Psoas muscle (tissue), 8 donors: ENCODE measurements at regions of chr5 and their contacts with region 1.

Region 1: GRCh38 chr5:61162010-61162831 is at the start of gene SMIM15:
- DNase-seq: peak; percentile 90 to 94
- ATAC-seq: peak; percentile 96 to 99 (median 98)
- H3K4me3 ChIP-seq: peak within 1 kb of the TSS; percentile 82
- H3K27ac ChIP-seq: peak within 1 kb of the TSS; percentile 91
- H3K4me1 ChIP-seq: peaks cover 15% of the 10 kb centered on the region
- H3K27me3 ChIP-seq: no peaks in the 10 kb centered on the region
- CTCF ChIP-seq: no peak
- total RNA-seq, gene SMIM15: 10.6 to 19.3 (median 14.5) TPM

Region 2: GRCh38 chr5:60944904-60945812 is 217.1 kb before region 1 on chr5 and contains the starts of genes ERCC8 and NDUFAF2:
- intact Hi-C with region 1: loop called (anchors 10 kb)
- DNase-seq: peak; percentile 87 to 92
- ATAC-seq: peak; percentile 99 to 100 (median 100)
- H3K4me3 ChIP-seq: peak within 1 kb of the TSS; percentile 83
- H3K27ac ChIP-seq: peak within 1 kb of the TSS; percentile 89
- H3K4me1 ChIP-seq: peaks cover 16% of the 10 kb centered on the region
- H3K27me3 ChIP-seq: no peaks in the 10 kb centered on the region
- CTCF ChIP-seq: no peak
- total RNA-seq, gene ERCC8: 2.9 to 5.1 (median 3.8) TPM
- total RNA-seq, gene NDUFAF2: 32.1 to 57.4 (median 41.3) TPM

Region 3: GRCh38 chr5:61115968-61116367 is 46.3 kb before region 1 on chr5:
- intact Hi-C with region 1: no loop called
- DNase-seq: no peak
- ATAC-seq: no peak
- H3K4me3 ChIP-seq: no peak overlapping the region
- H3K27ac ChIP-seq: no peak overlapping the region
- H3K4me1 ChIP-seq: no peaks in the 10 kb centered on the region
- H3K27me3 ChIP-seq: no peaks in the 10 kb centered on the region
- CTCF ChIP-seq: no peak